ENCODE measurements at regions of chr1 and their contacts with region 1.

Region 1: DNA sequence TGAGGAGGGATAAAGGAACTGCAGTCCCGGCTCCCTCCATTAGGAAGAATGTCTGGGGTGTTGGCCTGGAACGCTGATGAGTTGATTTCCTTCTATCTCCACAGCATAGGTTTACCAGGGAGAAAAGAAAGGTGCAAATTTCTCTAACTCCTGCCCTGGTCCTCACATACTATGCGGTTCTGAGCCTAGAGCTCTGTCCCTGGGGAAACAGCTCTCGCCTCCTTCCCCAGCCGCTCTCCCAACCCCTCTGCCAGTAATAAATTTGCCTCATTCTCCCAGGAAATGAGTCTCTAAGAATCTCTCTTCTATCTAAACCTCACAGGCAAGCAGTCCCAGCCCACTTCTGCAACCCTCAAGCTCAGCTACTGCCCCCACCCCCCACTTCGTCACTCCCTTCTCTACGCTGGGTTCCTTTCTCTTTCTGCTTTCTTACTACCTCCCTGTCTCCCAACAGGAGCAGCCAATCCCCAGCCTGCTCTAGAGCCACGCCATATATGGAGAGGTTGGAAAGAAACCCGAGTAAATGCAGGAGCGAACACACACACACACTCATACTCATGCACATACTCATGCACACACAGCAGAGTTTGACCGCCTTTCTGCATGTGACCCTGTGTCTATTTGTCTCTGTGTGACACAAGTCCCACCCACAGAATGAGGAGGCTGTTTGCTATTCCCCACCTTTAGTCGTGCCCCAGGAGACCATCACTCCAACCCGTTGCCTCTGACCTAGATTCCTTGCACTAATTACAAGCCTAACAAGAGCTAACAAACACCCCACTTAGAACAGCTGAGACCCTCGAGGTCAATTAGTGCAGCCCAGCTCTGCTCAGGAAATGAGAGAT is 13.4 kb downstream of the PLEKHO1 start:
- DNase-seq: no peak
- H3K4me3 Mint-ChIP-seq: no peak overlapping the region
- H3K27ac Mint-ChIP-seq: no peak overlapping the region
- H3K4me1 Mint-ChIP-seq: peaks cover 71% of the 10 kb centered on the region
- H3K27me3 Mint-ChIP-seq: no peaks in the 10 kb centered on the region

Region 2: DNA sequence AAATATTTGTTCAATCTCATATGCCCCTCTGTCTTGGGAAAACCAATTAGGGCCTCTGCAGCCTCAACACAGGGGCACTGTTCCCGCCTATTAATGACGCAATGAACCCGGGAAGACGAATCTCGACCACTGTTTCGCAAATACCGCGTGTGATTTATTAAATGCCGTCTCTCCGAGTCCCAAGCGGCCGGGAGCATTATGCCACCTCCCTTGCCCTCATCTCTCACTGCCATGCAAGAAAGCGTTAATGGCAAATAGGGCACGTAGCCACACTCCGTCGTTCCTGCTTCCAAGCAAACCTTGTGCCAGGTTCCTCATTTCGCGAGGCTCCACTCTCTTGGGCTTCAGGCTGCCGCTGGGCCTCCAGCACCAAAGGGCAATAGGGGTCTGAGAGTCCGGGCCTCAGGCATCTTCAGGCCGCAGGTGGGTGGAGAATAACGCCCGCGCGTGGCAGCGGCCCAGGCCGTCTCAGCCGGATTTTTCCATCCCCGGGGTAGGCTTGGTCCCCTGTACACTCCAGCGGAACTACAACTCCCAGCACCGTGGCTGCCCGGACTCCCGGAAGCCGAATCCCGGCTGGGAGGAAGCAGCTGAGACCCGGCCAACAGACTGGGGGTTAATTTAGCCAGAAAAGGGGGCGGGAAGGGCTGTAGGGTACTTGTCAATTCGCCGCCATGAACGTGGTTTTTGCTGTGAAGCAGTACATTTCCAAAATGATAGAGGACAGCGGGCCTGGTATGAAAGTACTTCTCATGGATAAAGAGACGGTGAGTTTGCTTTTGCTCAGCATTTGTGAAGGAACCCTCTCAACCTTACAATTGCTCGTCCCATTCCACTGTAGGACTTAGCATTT is 95.7 kb before region 1 on chr1 and contains the start of gene VPS45:
- CTCF ChIA-PET with region 1: interaction called, 233 read pairs
- DNase-seq: peak; percentile 90
- H3K4me3 Mint-ChIP-seq: peak within 1 kb of the TSS; percentile 88
- H3K27ac Mint-ChIP-seq: peak within 1 kb of the TSS; percentile 93
- H3K4me1 Mint-ChIP-seq: peaks cover 43% of the 10 kb centered on the region
- H3K27me3 Mint-ChIP-seq: peaks cover 9% of the 10 kb centered on the region

Region 3: GRCh38 chr1:150072959-150073358 is 90.1 kb before region 1 on chr1:
- CTCF ChIA-PET with region 1: interaction called, 233 read pairs
- DNase-seq: no peak
- H3K4me3 Mint-ChIP-seq: no peak overlapping the region
- H3K27ac Mint-ChIP-seq: peak overlapping the region; percentile 46
- H3K4me1 Mint-ChIP-seq: peaks cover 51% of the 10 kb centered on the region
- H3K27me3 Mint-ChIP-seq: no peaks in the 10 kb centered on the region

Region 4: GRCh38 chr1:150151291-150152181 is 11.5 kb before region 1 on chr1:
- CTCF ChIA-PET with region 1: interaction called, 10 read pairs
- DNase-seq: peak; percentile 85
- H3K4me3 Mint-ChIP-seq: peak overlapping the region; percentile 98
- H3K27ac Mint-ChIP-seq: peak overlapping the region; percentile 97
- H3K4me1 Mint-ChIP-seq: peaks cover 80% of the 10 kb centered on the region
- H3K27me3 Mint-ChIP-seq: peaks cover 17% of the 10 kb centered on the region

Region 5: GRCh38 chr1:150293433-150294168 is 130.5 kb after region 1 on chr1 and contains the start of gene MRPS21:
- CTCF ChIA-PET with region 1: no interaction called
- DNase-seq: peak; percentile 93
- H3K4me3 Mint-ChIP-seq: peak within 1 kb of the TSS; percentile 94
- H3K27ac Mint-ChIP-seq: peak within 1 kb of the TSS; percentile 92
- H3K4me1 Mint-ChIP-seq: peaks cover 35% of the 10 kb centered on the region
- H3K27me3 Mint-ChIP-seq: no peaks in the 10 kb centered on the region